Transverse colon (tissue), 4 donors: ENCODE measurements at regions of chr15 and their contacts with region 1.

Region 1: GRCh38 chr15:50876989-50877360 is 31.5 kb upstream of the AP4E1 start:
- DNase-seq: peak; percentile 81
- H3K4me3 ChIP-seq: peak overlapping the region in 2 of 4 donors; percentile 15 to 46
- H3K27ac ChIP-seq: peak overlapping the region; percentile 48 to 68 (median 62)
- H3K4me1 ChIP-seq: peaks cover 0 to 43% (median 11%) of the 10 kb centered on the region in 4 donors
- H3K27me3 ChIP-seq: no peaks in the 10 kb centered on the region
- CTCF ChIP-seq: peak; percentile 95 to 99 (median 97)
- EP300 ChIP-seq: no peak
- POLR2A ChIP-seq: no peak

Region 2: GRCh38 chr15:50670115-50670514 is 206.9 kb before region 1 on chr15:
- in situ Hi-C with region 1: loop called in 1 of 4 experiments (anchors 10 kb)
- intact Hi-C with region 1: no loop called
- DNase-seq: no peak
- H3K4me3 ChIP-seq: no peak overlapping the region
- H3K27ac ChIP-seq: no peak overlapping the region
- H3K4me1 ChIP-seq: no peaks in the 10 kb centered on the region
- H3K27me3 ChIP-seq: no peaks in the 10 kb centered on the region
- CTCF ChIP-seq: no peak
- EP300 ChIP-seq: no peak
- POLR2A ChIP-seq: no peak

Region 3: GRCh38 chr15:50686468-50687301 is 190.3 kb before region 1 on chr15 and contains the start of gene TRPM7:
- in situ Hi-C with region 1: loop called in 3 of 4 experiments (anchors 10 kb)
- intact Hi-C with region 1: loop called (anchors 10 kb)
- DNase-seq: peak; percentile 90
- H3K4me3 ChIP-seq: peak within 1 kb of the TSS; percentile 65 to 83 (median 71)
- H3K27ac ChIP-seq: peak within 1 kb of the TSS; percentile 86 to 96 (median 96)
- H3K4me1 ChIP-seq: peaks cover 12 to 45% (median 20%) of the 10 kb centered on the region in 4 donors
- H3K27me3 ChIP-seq: no peaks in the 10 kb centered on the region
- CTCF ChIP-seq: no peak
- EP300 ChIP-seq: no peak
- POLR2A ChIP-seq: peak; percentile 84
- total RNA-seq, gene TRPM7: 47.4 to 96.5 (median 48.8) TPM

Region 4: DNA sequence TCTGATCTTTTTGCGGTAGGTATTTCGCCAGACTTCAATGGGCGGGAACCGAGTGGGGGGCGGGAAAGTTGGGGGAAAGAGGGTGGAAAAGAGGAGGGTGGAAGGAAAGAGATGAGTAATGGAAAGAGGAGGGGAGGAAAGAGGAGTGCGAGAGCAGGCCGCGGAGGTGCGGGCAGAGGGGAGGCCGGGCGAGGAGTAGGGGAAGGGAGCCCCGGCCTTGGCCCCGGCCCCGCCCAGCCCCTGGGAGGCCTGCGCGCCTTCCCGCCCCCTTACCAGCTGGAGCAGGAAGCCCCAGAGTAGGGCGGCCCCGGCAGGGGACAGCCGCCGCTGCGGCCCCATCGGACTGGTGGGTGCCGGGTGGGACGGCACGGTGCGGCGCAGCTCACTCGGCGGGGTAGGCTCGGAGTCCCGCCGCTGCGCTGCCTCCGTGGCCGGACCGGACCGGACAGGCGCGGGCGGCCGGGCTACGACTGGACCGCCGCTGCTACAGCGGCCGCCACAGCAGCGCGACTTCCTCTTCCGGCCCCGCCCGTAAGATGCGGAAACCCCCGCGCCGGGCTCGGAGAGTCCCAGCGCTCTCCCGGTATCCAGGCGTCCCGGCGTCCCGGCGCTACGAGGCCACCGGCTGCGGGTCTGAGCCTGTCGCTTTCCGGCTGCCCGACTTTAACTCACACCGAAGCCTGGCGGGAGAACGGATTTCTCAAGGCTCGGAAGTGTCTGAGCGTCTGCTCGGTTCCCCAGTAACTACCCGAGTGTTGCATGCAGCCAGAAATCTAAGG is 111.6 kb before region 1 on chr15 and contains the start of gene SPPL2A:
- in situ Hi-C with region 1: loop called in 1 of 4 experiments (anchors 10 kb)
- intact Hi-C with region 1: loop called (anchors 10 kb)
- DNase-seq: peak; percentile 86
- H3K4me3 ChIP-seq: peak within 1 kb of the TSS; percentile 69 to 99 (median 94)
- H3K27ac ChIP-seq: peak within 1 kb of the TSS; percentile 95 to 99 (median 98)
- H3K4me1 ChIP-seq: peaks cover 10 to 50% (median 28%) of the 10 kb centered on the region in 4 donors
- H3K27me3 ChIP-seq: no peaks in the 10 kb centered on the region
- CTCF ChIP-seq: no peak
- EP300 ChIP-seq: no peak
- POLR2A ChIP-seq: peak; percentile 93
- total RNA-seq, gene SPPL2A: 325 to 777 (median 391) TPM

Region 5: GRCh38 chr15:51060030-51060673 is 183.2 kb after region 1 on chr15:
- in situ Hi-C with region 1: no loop called
- intact Hi-C with region 1: no loop called
- DNase-seq: no peak
- H3K4me3 ChIP-seq: no peak overlapping the region
- H3K27ac ChIP-seq: no peak overlapping the region
- H3K4me1 ChIP-seq: peaks cover 0 to 3% (median 0%) of the 10 kb centered on the region in 4 donors
- H3K27me3 ChIP-seq: no peaks in the 10 kb centered on the region
- CTCF ChIP-seq: no peak
- EP300 ChIP-seq: no peak
- POLR2A ChIP-seq: no peak